ENCODE measurements at regions of chr2 and their contacts with region 1.

Region 1: DNA sequence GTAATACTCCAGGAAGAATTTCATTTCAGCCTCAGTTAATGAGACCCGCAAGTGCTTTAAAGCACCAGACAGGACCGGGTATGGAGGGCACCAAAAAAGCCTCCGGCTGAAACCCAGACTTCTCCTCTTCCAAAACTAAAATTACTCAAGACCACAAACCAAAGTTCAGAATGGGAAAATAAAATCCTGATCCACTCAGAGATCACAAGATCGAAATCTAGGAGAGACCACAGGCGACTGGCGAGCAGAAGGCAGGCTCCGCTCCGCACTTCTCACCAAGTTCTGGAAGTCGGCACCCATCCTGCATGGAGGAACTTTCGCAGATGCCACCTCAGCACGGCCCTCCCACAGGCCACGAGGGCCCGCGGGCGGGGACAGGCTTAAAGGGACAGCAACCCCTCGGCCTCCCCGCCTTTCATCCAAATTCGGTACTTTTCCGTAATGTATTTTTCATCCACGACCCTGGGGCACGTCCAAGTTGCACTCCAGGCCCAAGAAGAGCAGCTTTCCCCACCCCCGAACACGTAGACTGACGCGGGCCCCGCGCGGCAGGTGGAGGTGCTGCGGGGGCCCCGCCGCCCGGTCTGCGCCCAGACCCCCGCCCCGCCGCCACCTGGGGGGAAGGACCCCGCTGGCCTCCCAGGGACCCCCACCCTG is 43.7 kb downstream of the HDLBP start:
- DNase-seq: peak; percentile 52
- ATAC-seq: peak; percentile 70
- H3K4me3 Mint-ChIP-seq: peak overlapping the region; percentile 94
- H3K27ac Mint-ChIP-seq: peak overlapping the region; percentile 89
- H3K4me1 Mint-ChIP-seq: peaks cover 36% of the 10 kb centered on the region
- H3K27me3 Mint-ChIP-seq: no peaks in the 10 kb centered on the region
- CTCF ChIP-seq: no peak

Region 2: DNA sequence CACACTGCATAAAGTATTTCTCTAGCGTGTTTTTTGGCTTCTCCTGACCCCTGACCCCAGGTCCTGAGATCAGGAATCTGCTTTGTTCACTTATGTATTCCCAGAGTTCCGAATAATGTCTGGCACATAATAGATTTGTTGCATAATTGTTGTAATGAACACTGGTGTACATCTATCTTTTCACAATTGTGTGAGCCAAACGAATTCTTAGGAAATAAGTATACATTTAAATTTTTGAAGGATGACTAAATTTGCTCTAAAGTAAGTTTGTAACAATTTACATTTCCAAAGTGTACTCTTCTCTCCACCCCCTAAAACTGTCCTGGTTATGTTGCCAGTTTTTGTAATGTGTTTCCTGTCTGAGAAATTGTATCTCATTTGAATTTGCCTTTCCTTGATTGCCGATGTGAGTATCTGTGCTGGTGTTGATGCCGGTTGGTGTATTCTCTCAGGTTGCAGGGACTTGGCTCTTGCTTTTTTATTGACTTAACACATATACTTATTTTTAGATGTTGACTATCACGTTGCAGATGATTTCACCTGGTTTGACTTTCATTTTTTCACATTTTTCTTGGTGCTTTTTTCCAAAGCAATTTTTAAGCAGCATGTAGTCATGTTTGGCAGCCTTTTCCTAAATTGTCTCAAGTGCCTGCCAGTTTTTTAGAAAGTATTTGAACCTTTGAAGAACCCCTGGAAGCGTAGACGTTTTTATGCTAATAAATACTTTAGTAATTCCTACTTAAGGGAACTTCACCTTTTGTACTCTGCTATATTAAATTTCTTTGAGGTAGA is 68.3 kb after region 1 on chr2:
- CTCF ChIA-PET with region 1: no interaction called
- POLR2A ChIA-PET with region 1: no interaction called
- intact Hi-C with region 1: loop called (anchors 1 kb)
- DNase-seq: no peak
- ATAC-seq: no peak
- H3K4me3 Mint-ChIP-seq: no peak overlapping the region
- H3K27ac Mint-ChIP-seq: no peak overlapping the region
- H3K4me1 Mint-ChIP-seq: peaks cover 21% of the 10 kb centered on the region
- H3K27me3 Mint-ChIP-seq: no peaks in the 10 kb centered on the region
- CTCF ChIP-seq: no peak

Region 3: GRCh38 chr2:241391892-241392665 is 120.3 kb after region 1 on chr2:
- CTCF ChIA-PET with region 1: no interaction called
- POLR2A ChIA-PET with region 1: no interaction called
- intact Hi-C with region 1: loop called (anchors 5 kb)
- DNase-seq: no peak
- ATAC-seq: peak; percentile 19
- H3K4me3 Mint-ChIP-seq: no peak overlapping the region
- H3K27ac Mint-ChIP-seq: peak overlapping the region; percentile 73
- H3K4me1 Mint-ChIP-seq: peaks cover 54% of the 10 kb centered on the region
- H3K27me3 Mint-ChIP-seq: no peaks in the 10 kb centered on the region
- CTCF ChIP-seq: no peak

Region 4: DNA sequence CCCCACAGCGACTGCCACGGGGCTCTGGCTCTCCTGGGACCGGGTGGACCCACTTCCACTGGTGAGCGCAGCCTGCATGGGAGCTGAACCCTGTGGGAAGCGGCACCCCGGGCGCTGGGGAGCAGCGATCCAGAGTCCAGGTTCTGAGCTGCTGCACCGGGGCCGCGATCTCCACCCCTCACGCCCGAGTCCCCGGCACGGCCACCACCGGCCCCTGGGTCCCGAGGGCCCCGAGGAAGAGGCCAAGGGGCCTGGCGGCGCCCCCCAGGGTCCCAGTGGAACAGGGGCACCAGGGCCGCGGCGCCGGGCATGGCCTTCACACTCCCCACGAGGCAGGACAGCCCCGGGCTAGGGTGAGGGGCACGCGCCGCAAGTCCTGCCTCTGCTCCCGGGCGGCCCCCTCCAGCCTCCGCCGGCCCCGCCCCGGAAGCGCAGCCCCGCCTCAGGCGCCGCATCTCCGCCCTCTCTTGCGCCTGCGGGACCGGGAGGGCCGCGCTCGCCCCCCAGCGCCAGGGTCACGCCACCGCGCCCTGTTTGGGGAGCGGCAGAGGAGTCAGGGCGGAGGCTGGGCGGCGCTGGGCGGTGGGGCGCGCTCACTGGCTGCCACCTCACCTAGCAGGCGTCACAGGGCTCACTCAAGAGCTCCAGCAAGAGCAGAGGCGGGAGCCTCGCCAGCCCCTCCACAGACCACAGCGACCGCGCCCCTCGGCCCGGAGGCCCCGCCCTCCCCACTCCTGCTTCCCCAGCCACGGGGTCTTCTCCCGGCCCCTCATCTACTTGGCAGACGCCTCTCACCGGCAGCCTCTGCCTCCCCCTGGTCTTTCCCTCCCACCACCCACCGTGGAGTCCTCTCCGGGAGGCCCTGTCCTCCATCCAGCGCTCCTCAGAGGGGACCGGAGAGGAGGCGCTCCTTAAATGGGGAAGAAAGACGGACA is 338.4 kb after region 1 on chr2:
- CTCF ChIA-PET with region 1: no interaction called
- POLR2A ChIA-PET with region 1: no interaction called
- intact Hi-C with region 1: loop called (anchors 10 kb)
- DNase-seq: peak; percentile 92
- ATAC-seq: peak; percentile 99
- H3K4me3 Mint-ChIP-seq: peak overlapping the region; percentile 66
- H3K27ac Mint-ChIP-seq: peak overlapping the region; percentile 53
- H3K4me1 Mint-ChIP-seq: peaks cover 15% of the 10 kb centered on the region
- H3K27me3 Mint-ChIP-seq: no peaks in the 10 kb centered on the region
- CTCF ChIP-seq: no peak